PC-3 (cell line): ENCODE measurements at regions of chr1 and their contacts with region 1.

Region 1: GRCh38 chr1:171457412-171457811 is 27.9 kb upstream of the PRRC2C start:
- DNase-seq: peak; percentile 26
- ATAC-seq: peak; percentile 59
- H3K4me3 ChIP-seq: no peak overlapping the region
- H3K27ac ChIP-seq: no peak overlapping the region
- H3K4me1 ChIP-seq: peaks cover 14% of the 10 kb centered on the region
- H3K27me3 ChIP-seq: no peaks in the 10 kb centered on the region
- CTCF ChIP-seq: no peak

Region 2: DNA sequence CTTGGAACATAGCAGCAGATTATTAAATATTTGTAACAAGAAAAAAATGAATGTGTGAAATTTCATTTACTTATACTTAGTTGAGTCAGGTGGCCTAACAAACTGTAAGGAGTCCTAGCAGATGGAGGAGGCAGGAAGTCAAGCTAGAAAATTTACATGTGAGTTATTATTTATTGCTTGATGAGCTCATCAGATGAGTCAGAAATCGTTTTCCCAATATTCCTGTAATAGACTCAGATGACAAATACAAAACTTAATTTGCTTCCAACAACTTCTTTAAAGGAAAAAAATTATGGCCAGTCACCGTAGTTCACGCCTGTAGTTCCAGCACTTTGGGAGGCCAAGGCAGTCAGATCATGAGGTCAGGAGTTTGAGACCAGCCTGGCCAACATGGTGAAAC is 16.1 kb before region 1 on chr1:
- CTCF ChIA-PET with region 1: no interaction called
- POLR2A ChIA-PET with region 1: no interaction called
- intact Hi-C with region 1: loop called (anchors 1 kb)
- DNase-seq: peak; percentile 99
- ATAC-seq: peak; percentile 59
- H3K4me3 ChIP-seq: no peak overlapping the region
- H3K27ac ChIP-seq: peak overlapping the region; percentile 71
- H3K4me1 ChIP-seq: peaks cover 34% of the 10 kb centered on the region
- H3K27me3 ChIP-seq: no peaks in the 10 kb centered on the region
- CTCF ChIP-seq: no peak

Region 3: GRCh38 chr1:171477804-171478203 is 20.4 kb after region 1 on chr1:
- CTCF ChIA-PET with region 1: no interaction called
- POLR2A ChIA-PET with region 1: interaction called, 6 read pairs
- intact Hi-C with region 1: loop called (anchors 2 kb)
- DNase-seq: no peak
- ATAC-seq: no peak
- H3K4me3 ChIP-seq: no peak overlapping the region
- H3K27ac ChIP-seq: no peak overlapping the region
- H3K4me1 ChIP-seq: no peaks in the 10 kb centered on the region
- H3K27me3 ChIP-seq: no peaks in the 10 kb centered on the region
- CTCF ChIP-seq: no peak

Region 4: GRCh38 chr1:171583581-171584201 is 126.3 kb after region 1 on chr1:
- CTCF ChIA-PET with region 1: no interaction called
- POLR2A ChIA-PET with region 1: interaction called, 20 read pairs
- intact Hi-C with region 1: no loop called
- DNase-seq: no peak
- ATAC-seq: peak; percentile 16; the same call in 1 of the 2 replicates
- H3K4me3 ChIP-seq: no peak overlapping the region
- H3K27ac ChIP-seq: no peak overlapping the region
- H3K4me1 ChIP-seq: no peaks in the 10 kb centered on the region
- H3K27me3 ChIP-seq: no peaks in the 10 kb centered on the region
- CTCF ChIP-seq: no peak